ENCODE measurements at regions of chr12 and their contacts with region 1.

Region 1: DNA sequence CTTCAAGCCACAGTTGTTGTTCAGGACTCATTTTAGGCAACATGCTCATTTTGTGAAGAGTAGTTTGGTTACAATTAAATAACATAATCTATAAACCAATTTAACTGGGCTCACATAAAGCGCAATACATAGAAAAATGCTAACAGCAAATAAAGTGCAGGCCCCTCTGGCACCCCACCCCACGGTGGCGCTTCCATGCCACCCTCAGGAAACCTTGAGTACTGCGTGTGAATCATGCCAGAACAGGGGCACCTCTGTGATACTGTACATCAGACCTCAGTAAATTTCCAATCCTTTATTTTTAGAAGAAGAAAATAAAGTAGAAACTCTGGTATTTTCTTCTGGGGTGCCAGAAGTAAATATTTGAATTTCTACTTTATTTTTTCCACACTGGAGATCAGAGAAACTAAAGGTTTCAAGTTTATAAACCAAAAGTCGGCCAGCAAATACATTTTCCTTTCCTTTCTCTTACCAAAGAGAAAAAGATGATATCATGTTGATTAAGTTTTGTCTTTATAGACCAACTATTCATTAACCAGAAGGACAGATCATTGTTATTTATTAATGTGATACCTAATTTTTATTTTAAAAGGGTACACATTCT is 316.8 kb downstream of the PAWR start:
- DNase-seq: peak; percentile 46 to 73
- H3K4me3 ChIP-seq: no peak overlapping the region
- H3K4me3 Mint-ChIP-seq: no peak overlapping the region
- H3K27ac Mint-ChIP-seq: no peak overlapping the region
- H3K4me1 ChIP-seq: peaks cover 31% of the 10 kb centered on the region
- H3K4me1 Mint-ChIP-seq: peaks cover 37% of the 10 kb centered on the region
- H3K27me3 ChIP-seq: no peaks in the 10 kb centered on the region
- H3K27me3 Mint-ChIP-seq: no peaks in the 10 kb centered on the region
- CTCF ChIP-seq: peak; percentile 87 to 90

Region 2: DNA sequence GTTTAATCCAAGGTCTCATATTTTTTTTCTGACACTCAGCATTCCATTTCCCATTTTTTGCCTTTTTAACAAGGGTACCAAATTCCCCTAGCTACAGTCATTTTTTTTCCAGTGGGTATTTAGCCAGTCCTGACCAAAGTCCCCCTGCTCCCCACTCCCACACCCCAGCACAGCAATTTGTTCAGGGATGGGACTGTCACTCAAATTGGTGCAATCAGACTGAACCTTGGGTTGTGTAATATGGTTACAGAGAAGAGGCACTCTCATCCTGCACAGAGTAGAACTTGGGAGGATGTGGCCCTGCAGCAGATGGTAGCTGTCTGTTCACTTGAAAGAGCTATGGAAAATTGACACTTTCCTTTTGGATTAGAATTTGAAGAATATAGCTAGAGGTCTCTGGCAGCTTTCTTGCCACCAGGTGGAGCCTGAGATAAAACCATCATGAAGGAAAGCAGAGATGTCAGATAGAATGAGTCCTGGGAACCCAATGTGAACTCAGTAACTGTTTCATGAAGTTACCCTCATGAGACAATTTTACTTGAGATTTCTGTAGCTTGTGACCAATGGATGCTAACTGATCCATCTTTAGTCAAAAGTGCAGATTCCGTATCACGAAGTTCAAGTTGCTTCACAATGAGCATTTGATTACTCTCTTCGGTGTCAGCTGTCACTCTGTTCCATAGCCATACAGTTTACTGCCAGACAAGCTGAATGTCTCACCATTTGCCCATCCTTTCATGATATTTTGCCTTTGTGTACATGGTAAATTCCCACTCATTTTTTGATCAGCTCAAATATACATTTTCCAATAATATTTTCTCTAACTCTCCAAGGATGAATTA is 903.4 kb before region 1 on chr12:
- CTCF ChIA-PET with region 1: interaction called, 4 read pairs
- POLR2A ChIA-PET with region 1: no interaction called
- intact Hi-C with region 1: loop called (anchors 1 kb)
- DNase-seq: peak; percentile 48 to 50
- H3K4me3 ChIP-seq: no peak overlapping the region
- H3K4me3 Mint-ChIP-seq: no peak overlapping the region
- H3K27ac Mint-ChIP-seq: no peak overlapping the region
- H3K4me1 ChIP-seq: no peaks in the 10 kb centered on the region
- H3K4me1 Mint-ChIP-seq: no peaks in the 10 kb centered on the region
- H3K27me3 ChIP-seq: no peaks in the 10 kb centered on the region
- H3K27me3 Mint-ChIP-seq: peaks cover 6% of the 10 kb centered on the region
- CTCF ChIP-seq: peak; percentile 65 to 74

Region 3: DNA sequence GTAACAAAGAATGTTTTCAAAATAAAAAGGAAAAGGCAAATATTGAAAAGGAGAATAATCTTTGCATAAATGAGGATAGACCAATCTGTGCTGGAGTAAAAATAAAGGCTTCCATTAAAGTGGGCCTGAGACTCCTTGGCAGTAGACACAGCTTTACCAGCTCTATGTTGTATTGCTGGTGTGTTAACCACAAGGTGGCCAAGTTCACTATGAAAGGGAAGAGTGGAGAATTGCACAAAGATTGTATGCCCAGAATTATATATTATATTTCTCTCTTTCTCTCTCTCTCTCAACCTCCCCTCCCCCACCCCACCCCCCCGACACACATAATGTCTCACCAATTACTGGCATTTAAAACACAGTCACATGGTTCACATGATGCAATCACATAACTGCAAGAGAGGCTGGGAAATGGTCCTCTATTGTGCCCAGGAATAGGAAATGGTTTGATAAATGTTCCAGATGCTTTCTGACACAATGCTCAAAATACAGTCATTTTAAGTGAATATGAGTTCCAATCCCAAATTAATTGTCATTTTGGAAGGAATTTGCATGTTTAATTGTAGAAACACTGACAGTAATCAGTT is 732.1 kb before region 1 on chr12:
- CTCF ChIA-PET with region 1: no interaction called
- POLR2A ChIA-PET with region 1: no interaction called
- intact Hi-C with region 1: loop called (anchors 5 kb)
- DNase-seq: no peak
- H3K4me3 ChIP-seq: no peak overlapping the region
- H3K4me3 Mint-ChIP-seq: no peak overlapping the region
- H3K27ac Mint-ChIP-seq: no peak overlapping the region
- H3K4me1 ChIP-seq: no peaks in the 10 kb centered on the region
- H3K4me1 Mint-ChIP-seq: no peaks in the 10 kb centered on the region
- H3K27me3 ChIP-seq: no peaks in the 10 kb centered on the region
- H3K27me3 Mint-ChIP-seq: no peaks in the 10 kb centered on the region
- CTCF ChIP-seq: peak in 1 of 2 experiments; percentile 30

Region 4: GRCh38 chr12:79121487-79121886 is 252.5 kb before region 1 on chr12:
- CTCF ChIA-PET with region 1: no interaction called
- POLR2A ChIA-PET with region 1: no interaction called
- intact Hi-C with region 1: loop called (anchors 1 kb)
- DNase-seq: peak in 1 of 2 experiments; percentile 16
- H3K4me3 ChIP-seq: no peak overlapping the region
- H3K4me3 Mint-ChIP-seq: no peak overlapping the region
- H3K27ac Mint-ChIP-seq: no peak overlapping the region
- H3K4me1 ChIP-seq: no peaks in the 10 kb centered on the region
- H3K4me1 Mint-ChIP-seq: peaks cover 5% of the 10 kb centered on the region
- H3K27me3 ChIP-seq: no peaks in the 10 kb centered on the region
- H3K27me3 Mint-ChIP-seq: no peaks in the 10 kb centered on the region
- CTCF ChIP-seq: peak; percentile 42 to 58

Region 5: DNA sequence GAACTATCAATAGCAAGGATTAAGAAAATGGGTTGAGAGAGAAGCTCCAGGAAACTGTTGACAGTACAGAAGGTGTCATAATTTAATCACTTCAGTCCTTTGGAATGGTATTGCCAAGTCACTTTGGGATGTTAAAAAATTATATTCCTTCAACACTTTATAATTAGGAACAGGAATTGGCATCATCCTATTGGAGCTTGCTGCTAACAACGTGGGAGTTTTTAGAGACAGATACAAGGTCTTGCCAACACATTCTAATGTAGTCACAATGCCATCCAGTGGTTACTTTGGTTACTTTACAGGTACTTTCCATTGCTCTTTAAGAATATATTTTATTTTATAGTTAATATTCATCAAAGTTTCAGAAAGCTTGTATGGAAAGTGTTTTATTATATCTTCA is 199.4 kb before region 1 on chr12:
- CTCF ChIA-PET with region 1: interaction called, 3 read pairs
- POLR2A ChIA-PET with region 1: no interaction called
- intact Hi-C with region 1: loop called (anchors 1 kb)
- DNase-seq: peak in 1 of 2 experiments; percentile 7
- H3K4me3 ChIP-seq: no peak overlapping the region
- H3K4me3 Mint-ChIP-seq: no peak overlapping the region
- H3K27ac Mint-ChIP-seq: no peak overlapping the region
- H3K4me1 ChIP-seq: no peaks in the 10 kb centered on the region
- H3K4me1 Mint-ChIP-seq: no peaks in the 10 kb centered on the region
- H3K27me3 ChIP-seq: no peaks in the 10 kb centered on the region
- H3K27me3 Mint-ChIP-seq: no peaks in the 10 kb centered on the region
- CTCF ChIP-seq: peak in 1 of 2 experiments; percentile 14

Measured in Caco-2 (cell line).